ENCODE measurements at regions of chr18 and their contacts with region 1.

Region 1: GRCh38 chr18:59402432-59403090 is 43.5 kb upstream of the LMAN1 start:
- DNase-seq: peak; percentile 71
- ATAC-seq: peak; percentile 100
- H3K4me3 ChIP-seq: no peak overlapping the region
- H3K27ac ChIP-seq: no peak overlapping the region
- H3K4me1 ChIP-seq: no peaks in the 10 kb centered on the region
- H3K27me3 ChIP-seq: no peaks in the 10 kb centered on the region
- CTCF ChIP-seq: peak; percentile 84

Region 2: GRCh38 chr18:59249205-59249774 is 153.3 kb before region 1 on chr18:
- CTCF ChIA-PET with region 1: interaction called, 10 read pairs
- POLR2A ChIA-PET with region 1: no interaction called
- in situ Hi-C with region 1: no loop called
- intact Hi-C with region 1: loop called (anchors 5 kb)
- DNase-seq: peak; percentile 72
- ATAC-seq: peak; percentile 74; the same call in 1 of the 2 replicates
- H3K4me3 ChIP-seq: no peak overlapping the region
- H3K27ac ChIP-seq: no peak overlapping the region
- H3K4me1 ChIP-seq: no peaks in the 10 kb centered on the region
- H3K27me3 ChIP-seq: peaks cover 2% of the 10 kb centered on the region
- CTCF ChIP-seq: peak; percentile 71

Measured in Panc1 (cell line).